ENCODE measurements at regions of chr11 and their contacts with region 1.

Region 1: GRCh38 chr11:26761361-26761809 is 39.5 kb upstream of the SLC5A12 start:
- DNase-seq: no peak

Region 2: GRCh38 chr11:26730414-26731080 is 30.8 kb before region 1 on chr11:
- intact Hi-C with region 1: no loop called
- DNase-seq: no peak

Region 3: DNA sequence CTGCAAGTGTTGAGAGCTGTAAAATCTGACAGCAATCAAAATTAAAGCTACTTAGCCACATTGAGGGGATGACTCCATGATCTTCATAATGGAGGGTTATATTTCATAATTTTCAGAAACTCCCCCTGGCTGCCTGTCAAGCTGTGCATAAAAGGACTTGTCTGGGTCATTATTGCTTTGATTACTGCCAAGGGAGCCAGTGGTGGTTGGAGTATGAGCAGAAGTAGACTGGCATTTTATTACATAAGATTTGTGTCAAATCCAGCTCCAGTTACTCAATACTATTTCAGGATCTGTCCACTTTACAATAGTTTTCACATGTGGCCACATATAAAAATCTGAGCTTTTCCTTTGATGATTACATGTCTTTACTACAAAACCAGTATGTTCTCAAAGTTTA is 69.4 kb after region 1 on chr11:
- intact Hi-C with region 1: loop called in 1 of 2 experiments (anchors 10 kb)
- DNase-seq: no peak

Region 4: DNA sequence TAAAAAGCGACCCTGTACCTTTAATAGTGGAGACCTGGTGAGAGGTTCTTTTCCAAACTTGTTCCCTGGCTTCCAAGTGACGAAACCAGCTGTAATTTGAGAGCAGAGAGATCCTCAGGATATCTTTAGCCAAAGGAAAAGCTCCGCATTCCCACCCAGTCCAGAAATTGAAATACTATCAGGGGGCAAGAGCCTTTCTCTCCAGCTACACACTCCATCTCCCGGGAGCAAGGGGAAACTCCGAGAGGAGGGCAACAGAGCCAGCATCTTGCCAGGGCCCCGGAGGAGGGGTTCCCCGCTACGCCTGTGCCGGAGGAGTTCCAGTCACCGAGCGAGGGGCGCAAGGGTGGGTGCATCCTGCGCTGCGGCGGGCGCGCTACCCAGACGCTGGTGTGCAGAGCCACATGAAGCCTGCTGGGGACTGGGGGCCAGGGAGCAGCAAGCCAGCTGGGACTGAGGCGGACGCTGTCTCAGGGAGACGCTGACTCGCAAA is 232.6 kb after region 1 on chr11 and contains the start of gene FIBIN:
- intact Hi-C with region 1: loop called in 1 of 2 experiments (anchors 10 kb)
- DNase-seq: peak; percentile 78
- total RNA-seq, gene FIBIN: 24.5 to 32.8 TPM

Measured in posterior vena cava (tissue), 2 donors.